Mammary epithelial cell (primary cell): ENCODE measurements at regions of chr5 and their contacts with region 1.

Region 1: GRCh38 chr5:175796536-175797499 is 74.6 kb upstream of the CPLX2 start:
- DNase-seq: peak; percentile 79
- H3K4me3 ChIP-seq: peak overlapping the region in 1 of 3 experiments; percentile 10
- H3K27ac ChIP-seq: no peak overlapping the region
- H3K4me1 ChIP-seq: peaks cover 7% of the 10 kb centered on the region
- H3K27me3 ChIP-seq: no peaks in the 10 kb centered on the region
- CTCF ChIP-seq: no peak

Region 2: GRCh38 chr5:175597718-175598117 is 199.1 kb before region 1 on chr5:
- CTCF ChIA-PET with region 1: no interaction called
- dilution Hi-C with region 1: no loop called
- in situ Hi-C with region 1: no loop called
- intact Hi-C with region 1: no loop called
- DNase-seq: no peak
- H3K4me3 ChIP-seq: no peak overlapping the region
- H3K27ac ChIP-seq: no peak overlapping the region
- H3K4me1 ChIP-seq: no peaks in the 10 kb centered on the region
- H3K27me3 ChIP-seq: no peaks in the 10 kb centered on the region
- CTCF ChIP-seq: no peak

Region 3: GRCh38 chr5:175814691-175815090 is 17.9 kb after region 1 on chr5:
- CTCF ChIA-PET with region 1: no interaction called
- dilution Hi-C with region 1: no loop called
- in situ Hi-C with region 1: no loop called
- intact Hi-C with region 1: loop called (anchors 2 kb)
- DNase-seq: peak; percentile 78
- H3K4me3 ChIP-seq: no peak overlapping the region
- H3K27ac ChIP-seq: no peak overlapping the region
- H3K4me1 ChIP-seq: peaks cover 29% of the 10 kb centered on the region
- H3K27me3 ChIP-seq: no peaks in the 10 kb centered on the region
- CTCF ChIP-seq: no peak

Region 4: GRCh38 chr5:176458904-176459561 is 662.2 kb after region 1 on chr5:
- CTCF ChIA-PET with region 1: no interaction called
- dilution Hi-C with region 1: no loop called
- in situ Hi-C with region 1: no loop called
- intact Hi-C with region 1: no loop called
- DNase-seq: no peak
- H3K4me3 ChIP-seq: no peak overlapping the region
- H3K27ac ChIP-seq: no peak overlapping the region
- H3K4me1 ChIP-seq: no peaks in the 10 kb centered on the region
- H3K27me3 ChIP-seq: no peaks in the 10 kb centered on the region
- CTCF ChIP-seq: no peak